ENCODE measurements at regions of chr19 and their contacts with region 1.

Region 1: GRCh38 chr19:17605761-17606745 is 50.6 kb downstream of the COLGALT1 start:
- DNase-seq: peak; percentile 96
- CTCF ChIP-seq: peak; percentile 42

Region 2: GRCh38 chr19:17579661-17580244 is 26.3 kb before region 1 on chr19:
- CTCF ChIA-PET with region 1: interaction called, 16 read pairs
- POLR2A ChIA-PET with region 1: no interaction called
- DNase-seq: peak; percentile 83
- CTCF ChIP-seq: no peak

Region 3: DNA sequence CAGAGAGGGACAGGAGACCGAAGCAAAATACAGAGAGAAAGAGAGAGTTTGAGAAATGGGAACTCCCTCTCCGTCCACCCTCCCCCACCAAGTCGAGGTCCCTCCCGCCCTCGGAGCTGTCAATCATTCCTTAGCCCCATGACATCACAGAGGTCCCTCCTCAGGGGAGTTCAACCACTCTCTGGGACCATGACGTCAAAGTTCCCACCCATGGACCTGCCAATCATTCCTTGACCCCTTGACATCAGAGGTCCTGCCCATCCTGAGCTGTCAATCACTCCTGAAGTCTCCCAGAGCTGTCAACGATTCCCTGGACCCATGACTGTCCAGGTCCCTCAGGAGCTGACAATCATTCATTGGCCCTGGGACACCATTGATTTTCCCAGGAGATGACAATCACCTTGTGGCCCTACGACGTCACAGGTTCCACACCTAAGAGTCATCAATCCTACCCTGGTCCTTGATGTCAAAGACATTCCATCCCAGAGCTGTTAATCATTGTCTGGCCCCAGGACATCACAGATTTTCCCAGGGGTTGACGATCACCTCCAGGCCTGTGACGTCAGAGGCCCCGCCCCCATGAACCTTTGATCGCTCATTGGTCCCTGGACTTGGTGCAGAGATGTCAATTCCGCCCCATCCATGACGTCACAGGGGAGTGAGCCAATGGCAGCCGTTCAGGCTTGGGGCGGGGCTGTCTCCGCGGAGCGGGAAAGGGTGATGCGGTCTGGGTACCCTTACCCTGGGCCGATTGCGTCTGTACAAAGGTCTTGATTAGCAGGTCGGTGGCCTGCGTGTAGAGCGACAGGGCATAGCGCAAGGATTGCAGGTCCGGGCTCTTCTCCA is 11.1 kb after region 1 on chr19:
- CTCF ChIA-PET with region 1: interaction called, 43 read pairs
- POLR2A ChIA-PET with region 1: no interaction called
- DNase-seq: peak; percentile 74
- CTCF ChIP-seq: no peak

Region 4: DNA sequence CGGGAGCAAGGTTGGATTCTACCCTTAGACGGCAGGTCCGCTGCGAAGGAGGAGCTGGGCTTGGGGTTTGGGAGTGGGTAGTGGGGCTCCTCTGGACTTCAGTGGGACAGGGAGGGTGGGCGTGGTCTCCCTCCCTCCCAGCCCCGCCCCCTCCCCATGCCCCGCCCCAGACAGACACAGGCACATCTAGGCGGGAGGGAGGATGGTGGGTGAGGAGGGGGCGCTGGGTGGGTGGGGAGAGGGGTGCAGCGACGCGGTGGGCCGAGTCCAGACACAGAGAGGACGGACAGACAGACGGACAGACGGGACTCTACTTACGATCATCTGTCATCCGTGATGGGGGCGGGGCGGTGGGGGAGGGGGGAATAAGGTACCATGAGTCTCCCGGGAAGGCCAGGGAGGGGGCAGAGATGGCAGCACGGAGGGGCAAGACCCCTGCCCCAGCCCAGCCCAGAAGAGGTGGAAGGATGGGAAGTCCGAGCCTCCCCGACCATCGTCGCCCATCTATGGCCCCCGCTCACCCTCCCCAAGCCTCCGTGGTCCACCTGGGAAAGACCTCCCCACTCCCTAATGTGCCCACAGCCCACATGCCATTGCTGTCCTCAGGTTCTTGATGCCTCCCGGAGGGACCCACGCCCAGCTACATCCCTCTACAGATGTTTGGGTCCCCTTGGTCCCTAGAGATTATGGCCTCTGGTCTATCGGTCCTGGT is 17.3 kb after region 1 on chr19:
- CTCF ChIA-PET with region 1: interaction called, 43 read pairs
- POLR2A ChIA-PET with region 1: no interaction called
- DNase-seq: no peak
- CTCF ChIP-seq: no peak

Region 5: DNA sequence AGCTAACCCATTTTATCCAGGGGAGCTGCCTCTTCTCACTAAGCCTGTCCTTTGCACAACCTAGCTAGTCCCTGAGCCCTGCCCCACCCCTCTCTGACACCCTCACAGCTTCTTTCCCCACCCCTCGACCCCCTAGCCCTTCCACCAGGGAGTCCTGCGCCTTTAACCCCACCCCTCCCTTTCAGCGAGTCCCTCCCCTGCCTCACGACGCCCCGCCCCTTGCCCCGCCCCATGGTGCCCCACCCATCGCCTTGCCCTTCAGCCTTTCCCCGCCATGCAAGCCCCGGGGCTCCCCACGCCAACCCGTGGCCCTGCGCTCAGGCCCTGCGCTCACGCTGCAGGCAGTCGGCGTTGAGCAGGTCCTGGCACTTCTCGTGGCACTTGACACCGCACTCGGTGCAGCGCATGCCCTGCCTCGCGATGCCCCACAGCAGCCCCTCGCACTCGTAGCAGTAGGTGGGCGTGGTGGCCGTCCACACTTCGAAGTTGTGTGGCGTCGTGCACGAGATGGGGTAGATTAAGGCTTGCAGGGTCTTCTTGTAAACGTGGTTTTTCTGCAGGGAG is 42.1 kb after region 1 on chr19:
- CTCF ChIA-PET with region 1: no interaction called
- POLR2A ChIA-PET with region 1: no interaction called
- DNase-seq: no peak
- CTCF ChIP-seq: no peak